ENCODE measurements at regions of chr12 and their contacts with region 1.

Region 1: GRCh38 chr12:61538951-61539350 is 721.3 kb upstream of the USP15 start:
- DNase-seq: peak; percentile 26
- ATAC-seq: peak; percentile 55; the same call in 1 of the 2 replicates
- H3K4me3 ChIP-seq: no peak overlapping the region
- H3K27ac ChIP-seq: no peak overlapping the region
- H3K4me1 ChIP-seq: no peaks in the 10 kb centered on the region
- H3K27me3 ChIP-seq: no peaks in the 10 kb centered on the region
- CTCF ChIP-seq: peak; percentile 27 to 46 (median 43); a peak in 4 of 6 replicates
- POLR2A ChIP-seq: no peak
- RAD21 ChIP-seq: peak; percentile 70

Region 2: DNA sequence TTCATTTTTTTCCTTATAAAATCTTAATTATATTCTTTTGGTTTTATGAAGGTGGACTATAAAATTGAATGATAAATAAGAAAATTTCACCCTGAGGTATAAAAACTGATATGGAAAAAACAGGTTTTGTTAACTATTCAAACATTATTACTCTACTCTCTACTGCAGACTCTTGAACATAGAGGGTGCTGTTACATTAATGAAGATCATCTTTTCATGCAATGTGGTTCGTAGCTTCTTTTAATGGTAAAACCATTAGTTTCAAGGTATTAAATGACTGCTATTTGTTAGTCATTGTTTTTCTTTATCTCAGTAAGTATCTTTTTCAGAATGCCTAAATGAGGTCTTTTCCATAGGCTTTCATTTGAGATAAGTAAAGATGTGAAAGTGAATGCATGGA is 1432.7 kb before region 1 on chr12:
- CTCF ChIA-PET with region 1: no interaction called
- POLR2A ChIA-PET with region 1: no interaction called
- RAD21 ChIA-PET with region 1: no interaction called
- intact Hi-C with region 1: loop called (anchors 10 kb)
- DNase-seq: no peak
- ATAC-seq: no peak
- H3K4me3 ChIP-seq: no peak overlapping the region
- H3K27ac ChIP-seq: no peak overlapping the region
- H3K4me1 ChIP-seq: peaks cover 0 to 3% of the 10 kb centered on the region in 2 experiments; a peak in 1 of 4 replicates
- H3K27me3 ChIP-seq: no peaks in the 10 kb centered on the region
- CTCF ChIP-seq: peak in 2 of 3 experiments; percentile 19 to 42; a peak in 2 of 6 replicates
- POLR2A ChIP-seq: no peak
- RAD21 ChIP-seq: peak; percentile 45; the same call in 1 of the 2 replicates

Region 3: GRCh38 chr12:60501124-60501729 is 1037.7 kb before region 1 on chr12:
- CTCF ChIA-PET with region 1: no interaction called
- POLR2A ChIA-PET with region 1: no interaction called
- RAD21 ChIA-PET with region 1: no interaction called
- intact Hi-C with region 1: loop called (anchors 5 kb)
- DNase-seq: no peak
- ATAC-seq: peak; percentile 53
- H3K4me3 ChIP-seq: no peak overlapping the region
- H3K27ac ChIP-seq: no peak overlapping the region
- H3K4me1 ChIP-seq: no peaks in the 10 kb centered on the region
- H3K27me3 ChIP-seq: no peaks in the 10 kb centered on the region
- CTCF ChIP-seq: peak; percentile 10 to 23 (median 20); a peak in 4 of 6 replicates
- POLR2A ChIP-seq: no peak
- RAD21 ChIP-seq: peak; percentile 49

Region 4: DNA sequence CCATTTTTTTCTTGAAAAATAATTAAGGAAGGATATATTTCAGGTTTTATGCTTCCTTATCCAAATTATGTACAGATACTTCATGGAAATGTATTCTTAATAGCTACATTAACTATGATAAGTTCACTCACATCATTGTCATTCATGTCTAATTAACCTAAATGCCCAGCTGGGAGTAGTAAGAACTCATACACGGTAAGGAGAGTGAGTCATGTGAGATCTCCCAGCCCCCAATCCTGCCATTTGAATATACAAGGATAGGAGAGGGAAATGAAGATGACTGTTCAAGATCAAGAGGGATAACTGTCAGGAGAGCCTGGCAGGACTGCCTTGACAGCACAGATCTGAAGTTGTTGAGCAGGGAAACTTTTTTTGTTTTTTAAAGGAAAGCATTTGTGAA is 377.9 kb after region 1 on chr12:
- CTCF ChIA-PET with region 1: no interaction called
- POLR2A ChIA-PET with region 1: no interaction called
- RAD21 ChIA-PET with region 1: no interaction called
- intact Hi-C with region 1: no loop called
- DNase-seq: no peak
- ATAC-seq: no peak
- H3K4me3 ChIP-seq: no peak overlapping the region
- H3K27ac ChIP-seq: no peak overlapping the region
- H3K4me1 ChIP-seq: 0 out of 4 replicates have a peak, but pooled peaks cover 0 to 3% of the 10 kb centered on the region in 2 experiments
- H3K27me3 ChIP-seq: no peaks in the 10 kb centered on the region
- CTCF ChIP-seq: no peak
- POLR2A ChIP-seq: no peak
- RAD21 ChIP-seq: no peak